Activated B cell treated with CpG ODN at 0.5 μM for 24 hours (primary cell): ENCODE measurements at regions of chr11 and their contacts with region 1.

Region 1: DNA sequence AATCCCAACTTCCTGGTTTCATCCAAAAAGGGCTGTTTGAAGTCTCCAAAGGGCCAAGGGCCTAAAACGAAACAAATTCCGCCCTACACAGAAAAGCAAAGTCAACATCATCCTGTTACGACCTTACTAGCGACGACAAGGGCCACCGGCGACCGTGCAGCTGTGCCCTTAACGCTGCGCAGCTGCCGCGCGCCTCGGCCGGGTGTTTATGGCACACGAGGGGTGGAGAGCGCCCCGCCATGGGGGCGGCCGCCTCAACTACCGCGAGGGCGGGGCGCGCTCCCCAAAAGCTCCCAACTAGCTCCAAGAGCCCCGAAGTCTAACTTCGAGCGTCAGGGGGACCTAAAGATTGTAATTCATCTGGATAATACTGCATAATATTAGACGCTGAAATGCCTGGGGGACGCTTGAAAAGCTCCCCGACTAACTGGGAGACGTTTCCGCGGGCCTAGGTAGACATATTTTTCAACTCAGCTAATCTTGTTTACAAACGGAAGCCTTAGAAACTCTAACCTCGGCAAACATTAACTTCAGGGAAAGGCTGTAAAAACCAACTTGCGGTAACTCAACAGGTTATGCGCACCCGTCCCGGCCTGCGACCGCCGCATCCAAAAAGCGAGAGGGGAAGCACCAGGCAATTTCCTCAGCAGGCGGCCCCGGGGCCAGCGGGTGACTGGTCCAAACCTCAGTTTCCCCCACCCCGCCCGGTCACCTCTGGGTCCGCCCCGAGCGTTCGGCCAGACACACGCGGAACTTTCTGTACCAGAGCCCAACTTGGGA is 694 bp downstream of the TMEM123 start:
- DNase-seq: peak; percentile 61
- ATAC-seq: peak; percentile 57
- H3K4me3 Mint-ChIP-seq: peak overlapping the region; percentile 98
- H3K27ac Mint-ChIP-seq: peak overlapping the region; percentile 99
- H3K4me1 Mint-ChIP-seq: peaks cover 69% of the 10 kb centered on the region
- H3K27me3 Mint-ChIP-seq: no peaks in the 10 kb centered on the region
- CTCF ChIP-seq: no peak

Region 2: GRCh38 chr11:102287964-102288724 is 163.7 kb before region 1 on chr11:
- CTCF ChIA-PET with region 1: no interaction called
- POLR2A ChIA-PET with region 1: no interaction called
- intact Hi-C with region 1: loop called (anchors 2 kb)
- DNase-seq: no peak
- ATAC-seq: peak; percentile 84
- H3K4me3 Mint-ChIP-seq: peak overlapping the region; percentile 74
- H3K27ac Mint-ChIP-seq: peak overlapping the region; percentile 57
- H3K4me1 Mint-ChIP-seq: peaks cover 37% of the 10 kb centered on the region
- H3K27me3 Mint-ChIP-seq: no peaks in the 10 kb centered on the region
- CTCF ChIP-seq: no peak

Region 3: DNA sequence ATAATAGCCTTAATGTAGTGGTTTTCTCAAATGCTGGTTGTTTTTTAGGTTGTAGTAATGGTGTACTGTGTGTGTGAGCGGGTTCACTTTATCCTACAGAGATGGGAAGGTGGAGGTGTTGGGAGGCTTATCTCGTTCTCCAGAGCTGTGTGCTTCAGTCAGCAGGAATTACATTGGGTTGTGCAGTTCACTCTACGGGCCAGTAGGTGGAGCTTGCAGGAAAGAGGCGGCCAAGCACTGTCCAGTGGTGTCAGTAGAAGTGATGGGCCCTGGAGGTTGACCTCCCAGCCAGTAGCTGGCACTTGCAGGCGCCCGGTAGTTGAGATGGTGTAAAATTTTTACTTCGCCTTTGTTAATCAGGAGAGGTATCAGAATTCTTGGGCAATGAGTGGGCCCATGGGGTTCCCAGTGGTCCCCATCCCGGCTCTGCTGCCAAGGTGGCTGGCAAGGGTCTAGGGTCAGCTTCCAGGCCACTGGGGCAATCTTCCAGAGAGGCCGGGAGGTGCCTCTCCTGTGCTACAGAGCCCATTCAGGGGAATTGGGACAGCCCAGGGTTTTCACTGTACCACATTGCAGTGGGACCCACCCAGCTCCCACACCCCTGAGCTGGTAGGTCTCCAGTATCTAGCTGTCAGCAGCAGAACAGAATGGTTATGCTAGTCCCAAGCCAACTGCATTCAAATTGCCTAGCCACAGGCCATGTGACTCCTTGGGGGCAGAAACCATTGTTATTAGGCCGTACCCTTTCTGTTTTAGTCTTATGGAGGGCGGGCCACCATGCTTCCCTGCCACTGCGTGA is 61.0 kb before region 1 on chr11:
- CTCF ChIA-PET with region 1: interaction called, 16 read pairs
- POLR2A ChIA-PET with region 1: interaction called, 9 read pairs
- intact Hi-C with region 1: loop called (anchors 2 kb)
- DNase-seq: peak; percentile 37
- ATAC-seq: peak; percentile 95
- H3K4me3 Mint-ChIP-seq: no peak overlapping the region
- H3K27ac Mint-ChIP-seq: no peak overlapping the region
- H3K4me1 Mint-ChIP-seq: peaks cover 13% of the 10 kb centered on the region
- H3K27me3 Mint-ChIP-seq: no peaks in the 10 kb centered on the region
- CTCF ChIP-seq: peak; percentile 85

Region 4: DNA sequence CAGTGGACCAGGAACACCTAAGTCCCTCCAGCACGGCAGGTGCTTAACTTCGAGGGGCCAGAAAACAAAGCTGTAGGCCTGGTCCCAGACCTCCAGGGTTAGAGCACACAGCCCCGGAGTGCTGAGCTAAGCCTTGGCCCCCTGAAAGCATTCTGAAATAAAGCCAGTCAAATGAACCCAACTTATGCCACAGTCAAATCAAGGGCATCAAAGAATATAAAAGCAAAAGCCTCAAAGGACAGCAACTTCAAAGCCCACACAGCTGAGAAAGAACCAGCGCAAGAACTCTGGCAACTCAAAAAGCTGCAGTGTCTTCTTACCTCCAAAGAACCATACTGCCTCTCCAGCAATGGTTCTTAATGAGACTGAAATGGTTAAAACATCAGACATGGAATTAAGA is 38.4 kb before region 1 on chr11:
- CTCF ChIA-PET with region 1: no interaction called
- POLR2A ChIA-PET with region 1: no interaction called
- intact Hi-C with region 1: no loop called
- DNase-seq: no peak
- ATAC-seq: no peak
- H3K4me3 Mint-ChIP-seq: no peak overlapping the region
- H3K27ac Mint-ChIP-seq: no peak overlapping the region
- H3K4me1 Mint-ChIP-seq: peaks cover 60% of the 10 kb centered on the region
- H3K27me3 Mint-ChIP-seq: no peaks in the 10 kb centered on the region
- CTCF ChIP-seq: no peak

Region 5: GRCh38 chr11:102435688-102436087 is 16.2 kb before region 1 on chr11:
- CTCF ChIA-PET with region 1: no interaction called
- POLR2A ChIA-PET with region 1: interaction called, 14 read pairs
- intact Hi-C with region 1: loop called (anchors 1 kb)
- DNase-seq: no peak
- ATAC-seq: no peak
- H3K4me3 Mint-ChIP-seq: no peak overlapping the region
- H3K27ac Mint-ChIP-seq: no peak overlapping the region
- H3K4me1 Mint-ChIP-seq: peaks cover 38% of the 10 kb centered on the region
- H3K27me3 Mint-ChIP-seq: no peaks in the 10 kb centered on the region
- CTCF ChIP-seq: no peak

Region 6: GRCh38 chr11:102476812-102477211 is 24.9 kb after region 1 on chr11:
- CTCF ChIA-PET with region 1: interaction called, 5 read pairs
- POLR2A ChIA-PET with region 1: interaction called, 63 read pairs
- intact Hi-C with region 1: loop called (anchors 1 kb)
- DNase-seq: no peak
- ATAC-seq: no peak
- H3K4me3 Mint-ChIP-seq: peak overlapping the region; percentile 17
- H3K27ac Mint-ChIP-seq: peak overlapping the region; percentile 65
- H3K4me1 Mint-ChIP-seq: peaks cover 47% of the 10 kb centered on the region
- H3K27me3 Mint-ChIP-seq: no peaks in the 10 kb centered on the region
- CTCF ChIP-seq: no peak